ENCODE measurements at regions of chr13 and their contacts with region 1.

Region 1: GRCh38 chr13:48595431-48596429 is 58.0 kb upstream of the CYSLTR2 start:
- DNase-seq: peak; percentile 85 to 91 (median 88)
- H3K4me3 ChIP-seq: no peak overlapping the region
- H3K27ac ChIP-seq: no peak overlapping the region
- H3K4me1 ChIP-seq: peaks cover 2 to 17% (median 13%) of the 10 kb centered on the region in 4 experiments
- H3K27me3 ChIP-seq: peaks cover 0 to 5% (median 0%) of the 10 kb centered on the region in 5 experiments

Region 2: GRCh38 chr13:48334534-48335127 is 261.1 kb before region 1 on chr13:
- CTCF ChIA-PET with region 1: interaction called, 19 read pairs
- POLR2A ChIA-PET with region 1: no interaction called
- DNase-seq: peak; percentile 51 to 77 (median 75)
- H3K4me3 ChIP-seq: no peak overlapping the region
- H3K27ac ChIP-seq: no peak overlapping the region
- H3K4me1 ChIP-seq: peaks cover 0 to 6% (median 0%) of the 10 kb centered on the region in 4 experiments
- H3K27me3 ChIP-seq: no peaks in the 10 kb centered on the region

Region 3: GRCh38 chr13:48731957-48732569 is 136.3 kb after region 1 on chr13:
- CTCF ChIA-PET with region 1: interaction called, 92 read pairs
- POLR2A ChIA-PET with region 1: no interaction called
- DNase-seq: peak; percentile 43 to 65 (median 64)
- H3K4me3 ChIP-seq: peak overlapping the region in 3 of 7 experiments; percentile 32 to 53 (median 52)
- H3K27ac ChIP-seq: no peak overlapping the region
- H3K4me1 ChIP-seq: peaks cover 0 to 6% (median under 1%) of the 10 kb centered on the region in 4 experiments
- H3K27me3 ChIP-seq: no peaks in the 10 kb centered on the region

Region 4: GRCh38 chr13:48749699-48750473 is 154.2 kb after region 1 on chr13:
- CTCF ChIA-PET with region 1: interaction called, 10 read pairs
- POLR2A ChIA-PET with region 1: no interaction called
- DNase-seq: peak; percentile 16 to 62 (median 58)
- H3K4me3 ChIP-seq: no peak overlapping the region
- H3K27ac ChIP-seq: no peak overlapping the region
- H3K4me1 ChIP-seq: peaks cover 0 to 2% (median 0%) of the 10 kb centered on the region in 4 experiments
- H3K27me3 ChIP-seq: no peaks in the 10 kb centered on the region

Region 5: GRCh38 chr13:48769107-48769704 is 173.5 kb after region 1 on chr13:
- CTCF ChIA-PET with region 1: interaction called, 176 read pairs
- POLR2A ChIA-PET with region 1: interaction called, 4 read pairs
- DNase-seq: peak; percentile 86 to 94 (median 89)
- H3K4me3 ChIP-seq: no peak overlapping the region
- H3K27ac ChIP-seq: no peak overlapping the region
- H3K4me1 ChIP-seq: peaks cover 0 to 9% (median 0%) of the 10 kb centered on the region in 4 experiments
- H3K27me3 ChIP-seq: no peaks in the 10 kb centered on the region